Caco-2 (cell line): ENCODE measurements at regions of chr1 and their contacts with region 1.

Region 1: GRCh38 chr1:227489572-227489971 is 73.8 kb upstream of the ZNF678 start:
- DNase-seq: no peak
- H3K4me3 ChIP-seq: no peak overlapping the region
- H3K4me3 Mint-ChIP-seq: no peak overlapping the region
- H3K27ac Mint-ChIP-seq: no peak overlapping the region
- H3K4me1 ChIP-seq: no peaks in the 10 kb centered on the region
- H3K4me1 Mint-ChIP-seq: no peaks in the 10 kb centered on the region
- H3K27me3 ChIP-seq: no peaks in the 10 kb centered on the region
- H3K27me3 Mint-ChIP-seq: no peaks in the 10 kb centered on the region
- CTCF ChIP-seq: no peak

Region 2: GRCh38 chr1:227472772-227473171 is 16.8 kb before region 1 on chr1:
- CTCF ChIA-PET with region 1: no interaction called
- POLR2A ChIA-PET with region 1: no interaction called
- intact Hi-C with region 1: no loop called
- DNase-seq: no peak
- H3K4me3 ChIP-seq: no peak overlapping the region
- H3K4me3 Mint-ChIP-seq: no peak overlapping the region
- H3K27ac Mint-ChIP-seq: no peak overlapping the region
- H3K4me1 ChIP-seq: no peaks in the 10 kb centered on the region
- H3K4me1 Mint-ChIP-seq: no peaks in the 10 kb centered on the region
- H3K27me3 ChIP-seq: no peaks in the 10 kb centered on the region
- H3K27me3 Mint-ChIP-seq: peaks cover 14% of the 10 kb centered on the region
- CTCF ChIP-seq: no peak

Region 3: DNA sequence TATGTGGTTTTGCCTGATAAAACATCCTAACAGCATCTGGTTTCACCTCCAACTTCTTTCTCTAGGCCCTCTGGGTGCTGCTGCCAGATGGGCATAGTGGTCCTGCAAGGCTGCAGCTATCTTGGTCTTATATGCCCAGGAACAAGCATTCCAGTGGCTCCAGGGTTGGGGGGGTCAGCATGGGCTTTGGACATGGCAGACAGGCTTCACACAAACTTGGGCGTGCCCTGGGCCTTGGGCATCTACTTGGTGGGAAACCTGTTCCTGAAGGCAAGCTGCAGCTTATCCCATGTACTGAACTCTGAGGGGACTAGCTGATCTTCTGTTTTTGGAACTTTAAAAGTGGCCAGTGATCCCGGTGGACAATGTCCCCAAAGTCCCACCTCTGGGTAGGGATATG is 18.9 kb after region 1 on chr1:
- CTCF ChIA-PET with region 1: no interaction called
- POLR2A ChIA-PET with region 1: no interaction called
- intact Hi-C with region 1: no loop called
- DNase-seq: no peak
- H3K4me3 ChIP-seq: no peak overlapping the region
- H3K4me3 Mint-ChIP-seq: no peak overlapping the region
- H3K27ac Mint-ChIP-seq: no peak overlapping the region
- H3K4me1 ChIP-seq: no peaks in the 10 kb centered on the region
- H3K4me1 Mint-ChIP-seq: no peaks in the 10 kb centered on the region
- H3K27me3 ChIP-seq: no peaks in the 10 kb centered on the region
- H3K27me3 Mint-ChIP-seq: peaks cover 1% of the 10 kb centered on the region
- CTCF ChIP-seq: no peak

Region 4: GRCh38 chr1:227521782-227522181 is 32.2 kb after region 1 on chr1:
- CTCF ChIA-PET with region 1: no interaction called
- POLR2A ChIA-PET with region 1: no interaction called
- intact Hi-C with region 1: no loop called
- DNase-seq: no peak
- H3K4me3 ChIP-seq: no peak overlapping the region
- H3K4me3 Mint-ChIP-seq: no peak overlapping the region
- H3K27ac Mint-ChIP-seq: no peak overlapping the region
- H3K4me1 ChIP-seq: no peaks in the 10 kb centered on the region
- H3K4me1 Mint-ChIP-seq: peaks cover 6% of the 10 kb centered on the region
- H3K27me3 ChIP-seq: no peaks in the 10 kb centered on the region
- H3K27me3 Mint-ChIP-seq: no peaks in the 10 kb centered on the region
- CTCF ChIP-seq: no peak

Region 5: GRCh38 chr1:227728059-227728891 is 238.7 kb after region 1 on chr1:
- CTCF ChIA-PET with region 1: no interaction called
- POLR2A ChIA-PET with region 1: no interaction called
- intact Hi-C with region 1: loop called (anchors 10 kb)
- DNase-seq: peak; percentile 75 to 85
- H3K4me3 ChIP-seq: peak overlapping the region; percentile 51
- H3K4me3 Mint-ChIP-seq: peak overlapping the region; percentile 72
- H3K27ac Mint-ChIP-seq: peak overlapping the region; percentile 67
- H3K4me1 ChIP-seq: peaks cover 15% of the 10 kb centered on the region
- H3K4me1 Mint-ChIP-seq: peaks cover 6% of the 10 kb centered on the region
- H3K27me3 ChIP-seq: no peaks in the 10 kb centered on the region
- H3K27me3 Mint-ChIP-seq: no peaks in the 10 kb centered on the region
- CTCF ChIP-seq: no peak